ENCODE measurements at regions of chr12 and their contacts with region 1.

Region 1: GRCh38 chr12:27243804-27244683 is at the start of gene STK38L:
- DNase-seq: peak; percentile 94
- H3K4me3 ChIP-seq: peak within 1 kb of the TSS; percentile 74
- H3K27ac ChIP-seq: peak within 1 kb of the TSS; percentile 13
- H3K4me1 ChIP-seq: peaks cover 14% of the 10 kb centered on the region
- CTCF ChIP-seq: no peak
- total RNA-seq, gene STK38L: 15.2 and 18.9 TPM in 2 replicates

Region 2: DNA sequence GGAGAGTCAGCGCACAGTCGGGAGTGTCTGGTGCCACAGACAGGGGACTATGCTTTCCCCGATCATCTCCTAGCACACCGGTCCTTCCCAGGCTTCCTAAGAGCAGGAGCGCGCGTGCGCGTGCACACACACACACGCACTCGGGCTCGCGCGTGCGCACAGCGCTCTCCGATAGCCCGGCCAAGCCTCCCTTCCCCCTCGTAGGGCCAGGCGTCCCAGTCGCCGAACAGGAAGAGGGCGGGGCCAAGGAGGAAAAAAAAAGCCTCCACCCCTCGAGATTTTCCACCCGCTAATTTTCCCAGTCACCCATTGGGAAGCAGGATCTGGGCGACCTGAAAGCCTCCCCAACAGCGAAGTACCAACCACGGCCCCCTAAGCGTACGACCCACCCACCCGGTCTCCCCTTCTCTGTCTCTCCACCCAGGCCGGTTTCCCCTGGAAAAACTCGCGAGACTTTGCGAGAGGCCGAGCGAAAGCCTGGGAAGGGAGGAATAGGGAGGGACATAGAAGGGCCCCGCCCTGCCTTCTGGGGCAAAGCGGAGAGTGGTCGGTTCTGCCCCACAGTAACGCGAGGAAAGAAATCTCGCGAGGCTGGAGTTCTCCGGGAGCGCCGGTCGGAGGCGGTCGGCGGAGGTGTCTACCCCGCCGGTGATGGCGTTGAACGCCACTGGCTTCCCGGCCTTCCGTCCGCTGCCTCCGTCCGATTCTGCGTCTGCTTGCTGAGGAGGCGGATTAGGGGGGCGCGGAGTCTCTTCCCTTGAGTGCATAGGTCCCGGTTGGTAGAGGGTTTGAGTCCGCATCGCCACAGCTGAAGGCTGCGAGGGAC is 306.0 kb before region 1 on chr12 and contains the starts of genes FGFR1OP2 and INTS13:
- CTCF ChIA-PET with region 1: no interaction called
- POLR2A ChIA-PET with region 1: interaction called, 3 read pairs
- intact Hi-C with region 1: loop called (anchors 1 kb)
- DNase-seq: peak; percentile 98
- H3K4me3 ChIP-seq: peak within 1 kb of the TSS; percentile 89
- H3K27ac ChIP-seq: peak within 1 kb of the TSS; percentile 79
- H3K4me1 ChIP-seq: peaks cover 48% of the 10 kb centered on the region
- CTCF ChIP-seq: no peak
- total RNA-seq, gene FGFR1OP2: 35.0 and 45.0 TPM in 2 replicates
- total RNA-seq, gene INTS13: 33.4 and 34.2 TPM in 2 replicates

Region 3: DNA sequence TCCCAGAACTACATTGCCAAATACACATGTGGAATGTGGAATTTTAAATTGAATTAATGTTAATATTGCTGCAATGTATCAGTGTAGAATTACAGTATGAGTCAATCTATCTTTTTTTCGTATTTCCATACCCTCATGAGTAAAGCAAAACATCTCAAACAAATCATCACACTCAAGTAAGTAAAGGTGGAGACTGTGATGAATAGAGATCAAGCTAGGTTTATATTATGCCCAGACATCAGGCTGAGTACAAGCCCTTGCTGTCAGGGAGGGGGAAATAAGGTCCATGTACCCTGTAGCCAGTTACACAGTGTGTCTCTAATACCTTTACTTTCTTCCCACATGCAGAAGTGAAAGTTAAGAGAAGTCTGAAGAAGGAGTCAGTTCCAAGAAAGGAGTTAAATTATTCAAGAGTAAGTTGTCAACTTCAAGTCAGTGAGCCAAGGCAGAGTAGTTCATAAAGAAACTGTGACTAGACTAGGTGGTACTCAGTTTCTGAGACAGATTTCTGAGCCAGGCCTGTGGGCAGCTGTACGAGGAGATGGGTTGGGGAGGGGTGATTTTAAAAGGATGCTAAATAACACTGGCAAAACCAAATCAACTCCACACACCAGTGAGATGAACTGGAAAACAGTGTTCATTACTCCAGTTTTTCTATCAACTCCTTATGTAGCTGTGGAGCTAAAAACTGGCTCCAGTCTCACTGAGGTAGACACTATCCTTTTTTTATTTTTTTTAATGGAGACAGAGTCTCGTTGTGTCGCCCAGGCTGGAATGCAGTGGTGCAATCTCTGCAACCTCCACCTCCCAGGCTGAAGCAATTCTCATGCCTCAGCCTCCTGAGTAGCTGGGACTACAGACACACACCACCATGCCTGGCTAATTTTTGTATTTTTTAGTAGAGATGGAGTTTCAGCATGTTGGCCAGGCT is 23.7 kb before region 1 on chr12:
- CTCF ChIA-PET with region 1: no interaction called
- POLR2A ChIA-PET with region 1: interaction called, 5 read pairs
- intact Hi-C with region 1: loop called (anchors 1 kb)
- DNase-seq: peak; percentile 27
- H3K4me3 ChIP-seq: no peak overlapping the region
- H3K27ac ChIP-seq: no peak overlapping the region
- H3K4me1 ChIP-seq: peaks cover 25% of the 10 kb centered on the region
- CTCF ChIP-seq: no peak

Region 4: DNA sequence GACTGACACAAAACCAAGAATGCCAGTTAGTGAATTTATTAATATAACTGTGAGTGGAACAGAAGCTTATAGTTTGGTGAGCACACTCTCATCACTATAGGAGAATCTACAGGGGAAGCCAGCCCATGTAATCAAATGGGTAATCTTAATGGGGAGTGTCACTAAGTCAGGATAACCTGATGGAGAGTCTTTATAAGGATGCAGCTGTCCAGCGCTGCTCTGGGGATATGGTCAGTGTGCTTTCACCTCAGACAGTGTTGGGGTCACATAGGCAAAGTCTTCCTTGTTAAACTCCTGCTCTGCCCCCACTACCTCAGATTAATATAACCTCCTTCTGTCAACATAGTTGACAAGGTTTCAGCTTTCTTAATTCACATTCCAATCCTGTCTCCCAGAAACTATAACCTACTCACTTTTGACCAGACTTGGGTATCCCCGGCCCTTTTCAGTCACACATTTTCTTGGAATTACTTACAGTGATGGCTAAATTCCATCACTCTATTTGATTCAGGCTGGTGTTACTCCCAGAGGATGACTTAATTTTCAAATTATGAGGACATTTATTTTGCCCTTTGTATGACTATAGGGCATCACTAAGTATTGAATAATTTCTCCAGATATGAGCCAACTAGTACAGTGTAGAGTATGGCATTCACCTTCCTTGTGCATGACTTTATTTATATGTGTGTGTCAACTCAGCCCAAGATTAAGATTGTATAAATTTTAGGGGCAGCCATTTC is 13.2 kb after region 1 on chr12:
- CTCF ChIA-PET with region 1: no interaction called
- POLR2A ChIA-PET with region 1: interaction called, 14 read pairs
- intact Hi-C with region 1: no loop called
- DNase-seq: no peak
- H3K4me3 ChIP-seq: no peak overlapping the region
- H3K27ac ChIP-seq: no peak overlapping the region
- H3K4me1 ChIP-seq: no peaks in the 10 kb centered on the region
- CTCF ChIP-seq: no peak

Region 5: GRCh38 chr12:27277846-27278260 is 33.8 kb after region 1 on chr12:
- CTCF ChIA-PET with region 1: no interaction called
- POLR2A ChIA-PET with region 1: interaction called, 10 read pairs
- intact Hi-C with region 1: no loop called
- DNase-seq: no peak
- H3K4me3 ChIP-seq: no peak overlapping the region
- H3K27ac ChIP-seq: no peak overlapping the region
- H3K4me1 ChIP-seq: no peaks in the 10 kb centered on the region
- CTCF ChIP-seq: no peak

Region 6: GRCh38 chr12:27493260-27493940 is 249.4 kb after region 1 on chr12:
- CTCF ChIA-PET with region 1: no interaction called
- POLR2A ChIA-PET with region 1: no interaction called
- intact Hi-C with region 1: no loop called
- DNase-seq: no peak
- H3K4me3 ChIP-seq: no peak overlapping the region
- H3K27ac ChIP-seq: no peak overlapping the region
- H3K4me1 ChIP-seq: no peaks in the 10 kb centered on the region
- CTCF ChIP-seq: no peak

Measured in OCI-LY7 (cell line).